ENCODE measurements at regions of chr6 and their contacts with region 1.

Region 1: GRCh38 chr6:26025894-26026832 is 61.1 kb upstream of the HFE start:
- DNase-seq: peak; percentile 97
- ATAC-seq: peak; percentile 35
- H3K4me3 ChIP-seq: peak overlapping the region; percentile 58 to 99 (median 88)
- H3K4me3 Mint-ChIP-seq: peak overlapping the region; percentile 98
- H3K27ac ChIP-seq: peak overlapping the region; percentile 88 to 97
- H3K27ac Mint-ChIP-seq: peak overlapping the region; percentile 98
- H3K4me1 ChIP-seq: peaks cover 23 to 32% of the 10 kb centered on the region in 2 donors
- H3K4me1 Mint-ChIP-seq: peaks cover 49% of the 10 kb centered on the region
- H3K27me3 ChIP-seq: no peaks in the 10 kb centered on the region
- H3K27me3 Mint-ChIP-seq: no peaks in the 10 kb centered on the region
- CTCF ChIP-seq: peak; percentile 92

Region 2: DNA sequence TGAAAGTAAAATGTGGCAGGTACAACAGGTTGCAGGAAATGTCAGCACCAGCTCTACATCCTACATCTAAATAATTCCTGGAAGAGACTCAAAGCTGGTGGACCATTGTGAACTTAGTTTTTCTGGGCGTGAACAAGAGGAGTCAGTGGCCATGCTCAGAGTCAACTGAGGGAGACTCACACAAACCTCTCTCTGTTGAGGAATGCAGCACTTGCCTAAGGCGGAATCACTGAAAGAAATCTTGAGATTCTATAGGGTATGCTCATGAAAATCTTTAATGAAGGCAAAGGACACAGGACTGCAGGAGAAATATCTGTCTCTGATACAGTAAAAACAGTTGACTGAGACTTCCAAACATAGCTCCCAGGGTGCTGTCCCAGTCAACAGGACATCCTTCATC is 249.1 kb before region 1 on chr6:
- CTCF ChIA-PET with region 1: no interaction called
- POLR2A ChIA-PET with region 1: no interaction called
- intact Hi-C with region 1: no loop called
- DNase-seq: no peak
- ATAC-seq: no peak
- H3K4me3 ChIP-seq: no peak overlapping the region
- H3K4me3 Mint-ChIP-seq: no peak overlapping the region
- H3K27ac ChIP-seq: no peak overlapping the region
- H3K27ac Mint-ChIP-seq: no peak overlapping the region
- H3K4me1 ChIP-seq: no peaks in the 10 kb centered on the region
- H3K4me1 Mint-ChIP-seq: no peaks in the 10 kb centered on the region
- H3K27me3 ChIP-seq: peaks cover 0 to 15% (median 0%) of the 10 kb centered on the region in 4 experiments
- H3K27me3 Mint-ChIP-seq: peaks cover 19% of the 10 kb centered on the region
- CTCF ChIP-seq: no peak

Region 3: DNA sequence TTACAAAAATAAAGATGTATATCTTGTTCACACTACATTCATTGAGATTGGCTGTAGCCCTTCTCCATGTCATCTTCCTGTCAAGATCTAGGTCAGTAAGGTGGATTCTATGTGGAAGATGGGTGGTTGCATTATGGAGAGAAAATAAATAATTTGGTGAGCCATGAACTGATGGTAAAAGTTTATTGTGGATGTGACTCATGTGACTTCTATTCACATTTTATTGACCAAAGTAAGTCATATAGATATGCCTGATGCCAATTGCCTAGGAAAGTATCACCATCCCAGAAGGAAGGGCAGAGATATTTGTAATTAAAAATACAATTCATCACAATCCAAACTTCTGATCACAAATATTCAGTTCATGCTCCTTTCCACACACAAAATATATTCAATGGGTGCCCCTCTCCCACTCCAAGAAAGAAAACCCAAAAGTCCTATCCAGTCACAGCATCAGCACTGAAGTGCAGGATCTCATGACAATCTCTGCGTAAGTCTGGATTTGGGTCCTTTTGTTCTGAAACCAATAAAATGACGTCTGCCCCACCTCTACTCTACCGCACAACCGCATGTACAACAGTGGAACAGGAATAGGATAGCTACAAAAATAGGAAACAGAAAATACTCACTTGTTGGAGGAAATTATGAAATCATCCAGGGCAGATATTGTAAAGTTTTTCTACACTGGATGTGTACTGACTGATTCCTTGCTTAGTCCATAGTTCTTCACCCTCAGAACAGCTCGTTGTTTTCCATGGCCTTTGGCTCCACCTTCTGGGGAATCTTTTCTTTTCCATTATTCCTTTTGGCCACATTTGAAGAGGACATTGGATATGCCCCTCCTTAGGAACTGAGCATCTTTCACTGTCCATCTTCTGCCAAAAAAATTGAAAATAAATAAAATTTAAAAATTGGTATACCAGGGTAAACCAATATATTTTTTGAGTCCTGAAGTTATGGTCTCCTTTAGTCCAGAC is 136.0 kb before region 1 on chr6:
- CTCF ChIA-PET with region 1: no interaction called
- POLR2A ChIA-PET with region 1: no interaction called
- intact Hi-C with region 1: no loop called
- DNase-seq: no peak
- ATAC-seq: no peak
- H3K4me3 ChIP-seq: no peak overlapping the region
- H3K4me3 Mint-ChIP-seq: no peak overlapping the region
- H3K27ac ChIP-seq: no peak overlapping the region
- H3K27ac Mint-ChIP-seq: no peak overlapping the region
- H3K4me1 ChIP-seq: no peaks in the 10 kb centered on the region
- H3K4me1 Mint-ChIP-seq: no peaks in the 10 kb centered on the region
- H3K27me3 ChIP-seq: no peaks in the 10 kb centered on the region
- H3K27me3 Mint-ChIP-seq: peaks cover 13% of the 10 kb centered on the region
- CTCF ChIP-seq: no peak

Region 4: DNA sequence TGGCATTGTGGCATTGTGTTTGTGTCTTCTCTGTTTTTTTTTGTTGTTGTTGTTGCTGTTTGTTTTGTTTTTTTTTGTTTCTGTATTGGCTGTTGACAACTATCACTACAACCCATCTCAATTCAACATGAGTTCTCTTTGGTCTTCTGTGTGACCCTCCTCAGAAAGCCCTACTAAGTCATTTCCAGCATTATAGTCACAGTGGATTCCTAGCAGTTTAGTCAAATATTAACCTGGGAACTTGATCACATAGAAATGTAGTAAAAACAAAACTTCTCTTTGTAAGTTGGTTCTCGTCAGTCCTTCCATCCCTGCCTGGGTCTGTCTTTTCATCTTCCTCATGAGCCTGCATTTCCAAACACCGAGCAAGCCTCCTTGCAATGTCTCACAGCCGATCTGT is 112.4 kb before region 1 on chr6:
- CTCF ChIA-PET with region 1: no interaction called
- POLR2A ChIA-PET with region 1: no interaction called
- intact Hi-C with region 1: no loop called
- DNase-seq: no peak
- ATAC-seq: no peak
- H3K4me3 ChIP-seq: no peak overlapping the region
- H3K4me3 Mint-ChIP-seq: no peak overlapping the region
- H3K27ac ChIP-seq: no peak overlapping the region
- H3K27ac Mint-ChIP-seq: no peak overlapping the region
- H3K4me1 ChIP-seq: no peaks in the 10 kb centered on the region
- H3K4me1 Mint-ChIP-seq: peaks cover 4% of the 10 kb centered on the region
- H3K27me3 ChIP-seq: no peaks in the 10 kb centered on the region
- H3K27me3 Mint-ChIP-seq: peaks cover 10% of the 10 kb centered on the region
- CTCF ChIP-seq: no peak

Region 5: DNA sequence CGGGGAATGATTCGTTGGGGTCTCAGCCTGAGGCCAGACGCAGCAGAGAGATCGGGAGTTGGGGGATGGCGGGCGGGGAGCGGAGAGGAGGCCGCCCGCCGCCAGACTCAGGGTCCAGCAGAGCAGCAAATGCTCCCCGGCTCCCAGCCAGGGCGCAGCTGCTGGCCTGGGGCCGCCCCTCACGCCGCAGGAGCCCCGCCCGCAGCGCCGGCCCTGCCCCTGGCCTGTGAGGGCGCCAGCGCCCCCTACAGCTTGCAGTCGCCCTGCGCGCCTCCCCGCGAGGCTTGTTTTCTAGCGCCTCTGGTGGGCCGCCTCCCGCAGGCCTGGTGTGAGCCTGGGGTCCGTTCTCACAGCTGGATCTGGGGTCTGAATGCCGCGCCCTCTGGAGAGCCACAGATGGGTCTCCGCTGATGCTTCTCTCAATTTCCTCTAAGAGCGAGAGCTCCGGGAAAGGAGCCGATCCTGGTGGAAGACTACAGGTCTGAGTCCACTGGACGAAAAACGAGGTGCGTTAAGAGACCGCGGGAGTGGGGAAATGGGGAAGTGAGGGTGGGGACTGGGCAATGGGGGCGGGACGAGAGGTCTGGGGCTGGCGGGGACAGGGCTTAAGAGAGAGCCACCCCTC is 33.6 kb before region 1 on chr6:
- CTCF ChIA-PET with region 1: interaction called, 47 read pairs
- POLR2A ChIA-PET with region 1: interaction called, 61 read pairs
- intact Hi-C with region 1: no loop called
- DNase-seq: peak; percentile 97
- ATAC-seq: peak; percentile 87
- H3K4me3 ChIP-seq: peak overlapping the region; percentile 49 to 80 (median 72)
- H3K4me3 Mint-ChIP-seq: peak overlapping the region; percentile 99
- H3K27ac ChIP-seq: peak overlapping the region; percentile 84 to 94
- H3K27ac Mint-ChIP-seq: peak overlapping the region; percentile 100
- H3K4me1 ChIP-seq: peaks cover 11 to 20% of the 10 kb centered on the region in 2 donors
- H3K4me1 Mint-ChIP-seq: peaks cover 47% of the 10 kb centered on the region
- H3K27me3 ChIP-seq: no peaks in the 10 kb centered on the region
- H3K27me3 Mint-ChIP-seq: no peaks in the 10 kb centered on the region
- CTCF ChIP-seq: peak; percentile 99

Region 6: DNA sequence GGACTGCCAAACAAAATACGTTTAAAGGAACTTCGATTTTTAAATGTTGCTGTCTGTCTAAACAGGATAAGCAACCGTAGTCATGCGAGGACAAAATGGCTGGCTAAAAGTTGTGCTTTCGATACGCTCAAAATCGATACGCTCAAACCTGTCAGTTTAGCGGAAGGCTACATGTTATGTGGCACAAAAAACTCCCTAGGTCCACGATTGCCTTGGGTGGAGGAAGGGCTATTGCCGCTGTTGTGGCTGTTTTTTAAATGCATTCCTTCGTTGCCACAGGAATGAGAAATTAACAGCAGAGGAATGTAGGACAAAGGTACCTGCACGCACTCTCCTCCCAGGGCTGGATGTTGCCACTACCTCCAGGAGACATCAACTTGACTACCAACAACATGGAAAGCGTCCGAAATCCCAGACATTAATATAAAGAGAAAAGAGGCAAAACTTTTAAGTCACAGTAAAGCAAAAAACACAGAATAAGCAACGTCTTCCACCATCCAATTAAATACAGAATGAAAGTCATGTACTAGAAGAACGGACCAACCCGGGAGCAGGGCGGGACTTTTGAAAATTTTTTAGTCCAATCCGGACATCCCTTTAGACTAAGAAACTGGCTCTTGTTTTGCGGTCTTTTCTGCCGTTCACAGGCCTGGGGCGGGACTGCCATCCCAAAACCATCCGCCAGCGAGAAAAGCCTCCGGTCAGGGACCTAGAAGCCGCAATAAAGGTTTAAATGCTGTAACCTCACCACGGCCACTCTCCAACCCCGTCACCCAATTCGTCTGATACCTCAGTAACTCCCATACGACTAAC is 28.9 kb after region 1 on chr6:
- CTCF ChIA-PET with region 1: interaction called, 38 read pairs
- POLR2A ChIA-PET with region 1: interaction called, 33 read pairs
- intact Hi-C with region 1: loop called (anchors 1 kb)
- DNase-seq: peak; percentile 93
- ATAC-seq: peak; percentile 65
- H3K4me3 ChIP-seq: peak overlapping the region; percentile 69 to 100 (median 94)
- H3K4me3 Mint-ChIP-seq: peak overlapping the region; percentile 96
- H3K27ac ChIP-seq: peak overlapping the region; percentile 80 to 91
- H3K27ac Mint-ChIP-seq: peak overlapping the region; percentile 97
- H3K4me1 ChIP-seq: peaks cover 12 to 16% of the 10 kb centered on the region in 2 donors
- H3K4me1 Mint-ChIP-seq: peaks cover 15% of the 10 kb centered on the region
- H3K27me3 ChIP-seq: no peaks in the 10 kb centered on the region
- H3K27me3 Mint-ChIP-seq: no peaks in the 10 kb centered on the region
- CTCF ChIP-seq: no peak

Region 7: GRCh38 chr6:26103770-26104456 is 77.8 kb after region 1 on chr6:
- CTCF ChIA-PET with region 1: interaction called, 8 read pairs
- POLR2A ChIA-PET with region 1: interaction called, 29 read pairs
- intact Hi-C with region 1: no loop called
- DNase-seq: peak; percentile 98
- ATAC-seq: peak; percentile 87
- H3K4me3 ChIP-seq: peak overlapping the region; percentile 52 to 81 (median 62)
- H3K4me3 Mint-ChIP-seq: peak overlapping the region; percentile 88
- H3K27ac ChIP-seq: peak overlapping the region; percentile 78 to 79
- H3K27ac Mint-ChIP-seq: peak overlapping the region; percentile 99
- H3K4me1 ChIP-seq: peaks cover 5 to 15% of the 10 kb centered on the region in 2 donors
- H3K4me1 Mint-ChIP-seq: peaks cover 15% of the 10 kb centered on the region
- H3K27me3 ChIP-seq: no peaks in the 10 kb centered on the region
- H3K27me3 Mint-ChIP-seq: no peaks in the 10 kb centered on the region
- CTCF ChIP-seq: peak; percentile 66

Region 8: DNA sequence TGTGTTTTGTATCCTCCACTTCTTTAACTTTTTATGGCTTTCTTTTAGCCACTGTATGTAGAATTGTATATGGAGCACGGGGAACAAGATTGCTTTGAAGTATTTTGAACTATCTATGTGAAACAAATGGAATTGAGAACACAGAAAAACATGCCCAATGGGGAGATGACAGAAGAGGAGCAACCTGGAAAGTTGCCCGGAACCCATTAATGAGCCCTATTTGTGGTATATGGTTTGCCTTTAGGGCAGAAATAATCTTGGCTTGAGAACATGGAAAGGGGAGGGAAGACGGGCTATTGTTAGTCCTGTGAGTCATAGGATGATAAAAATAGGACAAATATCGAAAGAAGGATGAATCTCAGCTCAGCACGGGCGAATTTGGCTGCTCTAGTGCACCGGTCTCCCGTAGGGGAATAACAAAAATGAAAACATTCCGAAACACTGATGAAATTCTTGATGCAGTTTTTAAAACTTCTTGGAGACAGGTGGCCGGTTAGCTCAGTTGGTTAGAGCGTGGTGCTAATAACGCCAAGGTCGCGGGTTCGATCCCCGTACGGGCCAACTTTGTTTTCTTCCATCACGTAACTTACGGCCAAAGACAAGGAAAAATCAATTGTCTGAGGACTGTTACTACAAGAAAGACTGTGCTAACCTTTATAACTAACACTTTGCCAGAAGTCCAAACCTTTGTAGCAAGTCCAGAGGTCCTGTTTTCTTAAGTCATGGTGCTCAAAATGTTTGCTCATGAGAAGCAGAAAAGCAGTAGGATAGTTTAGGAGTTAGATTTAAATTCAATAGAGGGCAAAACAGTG is 527.7 kb after region 1 on chr6:
- CTCF ChIA-PET with region 1: no interaction called
- POLR2A ChIA-PET with region 1: no interaction called
- intact Hi-C with region 1: loop called (anchors 10 kb)
- DNase-seq: peak; percentile 92
- ATAC-seq: peak; percentile 42
- H3K4me3 ChIP-seq: peak overlapping the region; percentile 59 to 90 (median 74)
- H3K4me3 Mint-ChIP-seq: no peak overlapping the region
- H3K27ac ChIP-seq: peak overlapping the region; percentile 26 to 62
- H3K27ac Mint-ChIP-seq: no peak overlapping the region
- H3K4me1 ChIP-seq: peaks cover 15 to 45% of the 10 kb centered on the region in 2 donors
- H3K4me1 Mint-ChIP-seq: peaks cover 22% of the 10 kb centered on the region
- H3K27me3 ChIP-seq: no peaks in the 10 kb centered on the region
- H3K27me3 Mint-ChIP-seq: no peaks in the 10 kb centered on the region
- CTCF ChIP-seq: no peak

Region 9: DNA sequence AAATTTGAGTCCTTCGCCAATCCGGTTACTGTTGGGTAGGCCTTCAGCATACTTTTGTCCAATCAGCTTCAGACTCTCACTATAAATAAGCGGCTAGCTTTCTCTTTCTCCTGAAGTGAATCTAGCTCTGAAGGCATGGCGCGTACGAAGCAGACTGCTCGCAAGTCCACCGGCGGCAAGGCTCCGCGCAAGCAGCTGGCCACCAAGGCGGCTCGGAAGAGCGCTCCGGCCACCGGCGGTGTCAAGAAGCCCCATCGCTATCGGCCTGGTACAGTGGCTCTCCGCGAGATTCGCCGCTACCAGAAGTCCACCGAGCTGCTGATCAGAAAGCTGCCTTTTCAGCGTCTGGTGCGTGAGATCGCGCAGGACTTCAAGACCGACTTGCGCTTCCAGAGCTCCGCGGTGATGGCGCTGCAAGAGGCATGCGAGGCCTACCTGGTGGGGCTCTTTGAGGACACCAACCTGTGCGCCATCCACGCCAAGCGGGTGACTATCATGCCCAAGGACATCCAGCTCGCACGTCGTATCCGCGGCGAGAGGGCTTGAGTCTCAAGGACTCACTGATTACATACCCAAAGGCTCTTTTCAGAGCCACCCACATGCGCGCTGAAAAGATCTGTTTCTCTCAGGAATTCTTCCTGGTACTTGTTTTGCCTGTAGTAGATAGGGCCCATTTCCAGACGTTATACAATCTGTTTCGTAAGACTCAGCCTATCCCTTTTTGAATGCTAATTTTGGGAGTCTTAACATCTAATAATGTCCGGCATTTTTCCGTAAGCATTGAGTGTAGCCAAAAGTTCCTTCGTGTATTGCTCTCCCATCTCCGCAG is 1784.0 kb after region 1 on chr6:
- CTCF ChIA-PET with region 1: no interaction called
- POLR2A ChIA-PET with region 1: interaction called, 7 read pairs
- intact Hi-C with region 1: loop called (anchors 2 kb)
- DNase-seq: peak; percentile 96
- ATAC-seq: peak; percentile 50
- H3K4me3 ChIP-seq: peak overlapping the region; percentile 66 to 94 (median 84)
- H3K4me3 Mint-ChIP-seq: peak overlapping the region; percentile 98
- H3K27ac ChIP-seq: peak overlapping the region; percentile 82
- H3K27ac Mint-ChIP-seq: peak overlapping the region; percentile 99
- H3K4me1 ChIP-seq: peaks cover 37 to 47% of the 10 kb centered on the region in 2 donors
- H3K4me1 Mint-ChIP-seq: peaks cover 58% of the 10 kb centered on the region
- H3K27me3 ChIP-seq: no peaks in the 10 kb centered on the region
- H3K27me3 Mint-ChIP-seq: no peaks in the 10 kb centered on the region
- CTCF ChIP-seq: no peak

Measured in B cell (primary cell).